Activated naive CD4-positive, alpha-beta T cell treated with anti-CD3 and anti-CD28 coated beads, Interleukin-2, amount 10 ng/mL, durations not matched to agents 7 days and 5 days (primary cell): ENCODE measurements at regions of chr3 and their contacts with region 1.

Region 1: DNA sequence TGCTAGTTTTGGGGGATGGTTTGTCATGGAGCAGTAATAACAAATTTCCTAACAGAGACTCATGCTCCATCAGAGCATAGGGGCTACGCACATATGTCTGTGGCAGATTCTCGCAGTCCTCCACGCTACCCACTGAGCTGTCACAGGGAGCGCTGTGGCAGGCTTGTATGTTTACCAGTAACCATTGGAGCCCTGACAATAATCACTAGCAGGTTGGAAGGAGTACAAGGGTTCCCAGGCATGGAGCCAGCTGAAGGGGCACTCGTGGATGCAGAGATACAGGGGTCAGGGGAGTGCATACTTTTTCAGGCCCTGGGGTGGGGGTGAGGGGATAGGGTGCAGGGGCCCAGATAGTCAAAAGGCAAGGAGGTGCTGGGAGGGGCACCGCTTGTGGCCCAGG is 7.9 kb upstream of the GP9 start:
- DNase-seq: no peak
- H3K4me3 Mint-ChIP-seq: no peak overlapping the region
- H3K27ac Mint-ChIP-seq: no peak overlapping the region
- H3K4me1 Mint-ChIP-seq: peaks cover 10% of the 10 kb centered on the region
- H3K27me3 Mint-ChIP-seq: peaks cover 24% of the 10 kb centered on the region

Region 2: GRCh38 chr3:129003578-129004160 is 49.0 kb before region 1 on chr3:
- CTCF ChIA-PET with region 1: interaction called, 10 read pairs
- DNase-seq: peak; percentile 72
- H3K4me3 Mint-ChIP-seq: no peak overlapping the region
- H3K27ac Mint-ChIP-seq: no peak overlapping the region
- H3K4me1 Mint-ChIP-seq: peaks cover 54% of the 10 kb centered on the region
- H3K27me3 Mint-ChIP-seq: peaks cover 81% of the 10 kb centered on the region

Region 3: GRCh38 chr3:129026728-129027543 is 25.7 kb before region 1 on chr3:
- CTCF ChIA-PET with region 1: interaction called, 18 read pairs
- DNase-seq: peak; percentile 96
- H3K4me3 Mint-ChIP-seq: peak overlapping the region; percentile 72
- H3K27ac Mint-ChIP-seq: peak overlapping the region; percentile 85
- H3K4me1 Mint-ChIP-seq: peaks cover 27% of the 10 kb centered on the region
- H3K27me3 Mint-ChIP-seq: peaks cover 38% of the 10 kb centered on the region

Region 4: DNA sequence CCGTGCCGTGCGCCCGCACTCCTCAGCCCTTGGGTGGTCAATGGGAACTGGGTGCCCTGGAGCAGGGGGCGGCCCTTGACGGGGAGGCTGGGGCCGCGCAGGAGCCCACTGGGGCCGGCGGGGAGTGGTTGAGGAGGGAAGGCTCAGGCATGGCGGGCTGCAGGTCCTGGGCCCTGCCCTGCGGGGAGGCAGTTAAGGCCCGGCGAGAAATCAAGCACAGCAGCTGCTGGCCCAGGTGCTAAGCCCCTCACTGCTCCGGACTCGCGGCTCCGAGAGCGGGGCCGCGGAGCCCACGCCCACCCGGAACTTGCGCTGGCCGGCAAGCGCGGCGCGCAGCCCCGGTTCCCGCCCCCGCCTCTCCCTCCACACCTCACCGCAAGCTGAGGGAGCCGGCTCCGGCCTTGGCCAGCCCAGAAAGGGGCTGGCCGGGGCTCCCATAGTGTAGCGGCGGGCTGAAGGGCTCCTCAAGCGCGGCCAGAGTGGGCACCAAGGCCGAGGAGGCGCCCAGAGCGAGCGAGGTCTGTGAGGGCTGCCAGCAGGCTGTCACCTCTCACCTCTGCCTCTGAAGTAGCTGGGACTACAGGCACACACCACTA is 15.7 kb after region 1 on chr3:
- CTCF ChIA-PET with region 1: interaction called, 28 read pairs
- DNase-seq: peak; percentile 48
- H3K4me3 Mint-ChIP-seq: peak overlapping the region; percentile 54
- H3K27ac Mint-ChIP-seq: no peak overlapping the region
- H3K4me1 Mint-ChIP-seq: peaks cover 17% of the 10 kb centered on the region
- H3K27me3 Mint-ChIP-seq: peaks cover 25% of the 10 kb centered on the region

Region 5: DNA sequence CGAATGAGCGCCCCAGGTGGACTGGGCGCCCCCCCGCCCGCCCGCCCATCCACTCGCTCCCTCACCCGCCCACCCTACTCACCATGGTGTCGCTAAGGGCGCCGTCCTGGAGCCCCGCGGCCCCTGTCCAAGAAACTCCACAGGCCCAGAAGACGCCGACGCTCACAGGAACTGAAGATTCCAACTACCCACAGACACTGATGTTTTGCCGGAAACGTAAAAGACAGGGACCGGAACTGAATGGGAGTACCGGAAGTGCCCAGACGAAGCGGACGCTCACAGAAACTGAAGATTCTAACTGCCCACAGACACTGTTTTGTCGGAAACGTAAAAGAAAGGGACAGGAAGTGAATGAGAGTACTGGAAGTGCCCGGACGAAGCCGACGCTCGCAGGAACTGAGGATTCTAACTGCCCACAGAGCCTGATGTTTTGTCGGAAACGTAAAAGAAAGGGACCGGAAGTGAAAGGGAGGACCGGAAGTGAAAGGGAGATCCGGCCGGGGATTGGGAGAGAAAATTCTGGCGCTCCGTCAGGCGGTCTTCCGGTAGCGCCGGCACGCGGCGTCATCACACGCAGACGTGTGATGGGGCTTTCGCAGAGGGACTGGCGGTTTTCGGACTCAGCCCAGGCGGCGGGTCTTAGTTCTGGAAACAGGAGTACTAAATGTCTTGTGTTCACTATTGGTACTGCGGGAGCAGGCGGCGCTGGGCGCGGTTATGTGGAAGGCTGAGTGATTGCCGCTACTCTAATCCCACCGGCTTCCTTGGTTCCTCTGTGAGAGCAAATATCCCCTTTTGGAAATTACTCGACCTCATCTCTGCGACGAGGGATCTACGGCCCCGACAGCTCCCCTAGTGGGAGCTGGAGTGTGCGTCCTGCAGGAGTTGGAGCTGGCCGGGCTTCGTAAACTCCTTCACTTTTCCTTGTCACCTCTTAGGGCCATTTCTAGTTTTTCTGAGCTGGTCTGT is 108.5 kb after region 1 on chr3 and contains the start of gene ISY1:
- CTCF ChIA-PET with region 1: interaction called, 39 read pairs
- DNase-seq: peak; percentile 91
- H3K4me3 Mint-ChIP-seq: peak within 1 kb of the TSS; percentile 91
- H3K27ac Mint-ChIP-seq: peak within 1 kb of the TSS; percentile 97
- H3K4me1 Mint-ChIP-seq: peaks cover 36% of the 10 kb centered on the region
- H3K27me3 Mint-ChIP-seq: peaks cover 4% of the 10 kb centered on the region

Region 6: DNA sequence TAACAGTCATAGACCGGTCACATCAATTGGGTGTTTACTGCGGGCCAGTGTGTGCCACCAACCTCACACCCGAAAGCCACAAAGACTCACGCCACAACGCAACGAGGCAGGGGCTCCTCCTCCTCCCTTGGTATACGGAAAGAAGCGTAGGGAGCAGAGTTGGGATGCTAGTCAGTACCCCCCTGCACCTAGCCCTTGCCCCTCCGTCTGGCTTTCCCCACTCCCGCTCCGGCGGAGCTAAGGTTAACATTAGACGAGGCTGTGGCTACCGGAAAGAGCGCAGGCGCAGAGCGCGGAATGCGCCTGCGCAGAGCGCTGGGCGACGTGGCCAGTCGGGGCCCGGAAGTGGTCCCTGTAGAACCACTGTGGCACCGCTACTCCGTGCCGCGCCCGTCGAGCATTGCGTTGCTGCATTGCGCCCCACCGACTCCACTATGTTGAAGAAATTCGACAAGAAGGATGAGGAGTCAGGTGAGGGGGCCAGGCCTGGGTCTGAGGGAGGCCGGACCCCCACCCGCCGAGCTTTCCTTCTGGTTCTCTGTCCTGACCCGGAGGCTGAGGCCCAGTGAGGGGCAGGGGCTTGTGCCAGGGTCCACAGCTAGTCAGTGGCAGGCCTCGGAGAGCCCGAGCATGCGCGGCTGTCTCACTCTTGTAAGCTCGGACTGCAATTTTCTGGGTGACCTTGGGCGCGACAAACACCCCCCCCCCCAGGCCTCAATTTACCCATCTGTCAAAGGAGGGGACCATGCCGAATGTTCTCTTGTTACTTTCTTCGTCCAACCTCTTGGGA is 196.8 kb after region 1 on chr3 and contains the start of gene COPG1:
- CTCF ChIA-PET with region 1: interaction called, 78 read pairs
- DNase-seq: peak; percentile 89
- H3K4me3 Mint-ChIP-seq: peak within 1 kb of the TSS; percentile 96
- H3K27ac Mint-ChIP-seq: peak within 1 kb of the TSS; percentile 96
- H3K4me1 Mint-ChIP-seq: peaks cover 64% of the 10 kb centered on the region
- H3K27me3 Mint-ChIP-seq: peaks cover 6% of the 10 kb centered on the region

Region 7: GRCh38 chr3:129352650-129353588 is 300.2 kb after region 1 on chr3:
- CTCF ChIA-PET with region 1: no interaction called
- DNase-seq: no peak
- H3K4me3 Mint-ChIP-seq: no peak overlapping the region
- H3K27ac Mint-ChIP-seq: no peak overlapping the region
- H3K4me1 Mint-ChIP-seq: no peaks in the 10 kb centered on the region
- H3K27me3 Mint-ChIP-seq: peaks cover 20% of the 10 kb centered on the region